ENCODE measurements at regions of chr20 and their contacts with region 1.

Region 1: GRCh38 chr20:45792332-45792686 is 555 bp downstream of the DNTTIP1 start:
- DNase-seq: no peak
- ATAC-seq: peak; percentile 10

Region 2: DNA sequence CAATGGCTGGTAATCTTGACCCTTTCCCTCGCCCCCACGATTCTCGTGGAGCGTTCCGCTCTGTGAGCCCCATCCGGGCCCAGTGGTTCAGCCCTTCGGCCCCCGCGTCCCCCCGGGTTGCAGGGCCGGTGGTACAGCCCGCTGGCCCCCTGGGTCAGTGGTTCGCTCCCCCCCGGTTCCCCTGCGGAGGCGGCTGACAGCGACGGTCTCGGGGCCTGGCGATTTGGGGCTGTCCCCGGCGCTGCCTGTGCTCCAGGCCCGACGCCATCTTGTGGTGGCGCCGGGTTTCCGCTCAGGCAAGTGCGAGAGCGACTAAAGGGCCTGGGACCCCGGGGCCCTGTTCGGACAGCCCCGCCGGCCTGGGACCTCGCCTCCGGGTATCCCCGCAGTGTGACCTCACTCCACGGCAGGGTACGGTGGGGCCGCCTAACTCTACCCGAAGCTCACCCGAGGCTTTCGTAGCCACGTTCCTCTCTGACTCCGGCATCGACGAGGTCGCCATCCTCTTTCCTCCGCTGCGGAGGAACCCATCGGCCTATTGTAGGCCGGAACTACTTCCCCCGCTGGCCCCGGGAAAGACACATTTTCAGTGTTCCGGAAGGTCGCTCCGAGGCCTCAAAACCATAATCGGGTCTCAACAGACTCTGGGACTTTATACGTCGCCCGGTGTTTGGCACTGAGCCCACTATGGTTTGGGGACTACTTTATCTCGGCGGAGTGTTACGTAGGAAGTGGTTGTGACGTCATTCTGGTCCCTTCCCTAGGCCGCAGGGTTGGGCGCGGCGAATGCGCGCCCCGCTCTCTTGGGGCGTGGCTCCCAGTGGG is 179.6 kb after region 1 on chr20 and contains the start of gene ZNF335:
- intact Hi-C with region 1: loop called (anchors 5 kb)
- DNase-seq: peak; percentile 98
- ATAC-seq: peak; percentile 96
- total RNA-seq, gene ZNF335: 9.7 TPM

Measured in Right ventricle myocardium inferior (tissue), 1 donor.